Activated CD4-positive, alpha-beta T cell treated with anti-CD3 and anti-CD28 coated beads for 36 hours (primary cell): ENCODE measurements at regions of chr6 and their contacts with region 1.

Region 1: GRCh38 chr6:132483779-132484679 is 28.9 kb downstream of the STX7 start:
- DNase-seq: peak; percentile 55
- ATAC-seq: peak; percentile 55
- H3K4me3 Mint-ChIP-seq: no peak overlapping the region
- H3K27ac Mint-ChIP-seq: no peak overlapping the region
- H3K4me1 Mint-ChIP-seq: peaks cover 22% of the 10 kb centered on the region
- H3K27me3 Mint-ChIP-seq: no peaks in the 10 kb centered on the region

Region 2: GRCh38 chr6:131914967-131915751 is 568.9 kb before region 1 on chr6:
- CTCF ChIA-PET with region 1: interaction called, 3 read pairs
- POLR2A ChIA-PET with region 1: no interaction called
- intact Hi-C with region 1: loop called (anchors 5 to 10 kb)
- DNase-seq: peak; percentile 72
- ATAC-seq: peak; percentile 76
- H3K4me3 Mint-ChIP-seq: no peak overlapping the region
- H3K27ac Mint-ChIP-seq: no peak overlapping the region
- H3K4me1 Mint-ChIP-seq: peaks cover 9% of the 10 kb centered on the region
- H3K27me3 Mint-ChIP-seq: peaks cover 32% of the 10 kb centered on the region

Region 3: GRCh38 chr6:132289756-132290155 is 194.3 kb before region 1 on chr6:
- CTCF ChIA-PET with region 1: interaction called, 19 read pairs
- POLR2A ChIA-PET with region 1: no interaction called
- intact Hi-C with region 1: no loop called
- DNase-seq: no peak
- ATAC-seq: no peak
- H3K4me3 Mint-ChIP-seq: no peak overlapping the region
- H3K27ac Mint-ChIP-seq: no peak overlapping the region
- H3K4me1 Mint-ChIP-seq: no peaks in the 10 kb centered on the region
- H3K27me3 Mint-ChIP-seq: peaks cover 2% of the 10 kb centered on the region

Region 4: DNA sequence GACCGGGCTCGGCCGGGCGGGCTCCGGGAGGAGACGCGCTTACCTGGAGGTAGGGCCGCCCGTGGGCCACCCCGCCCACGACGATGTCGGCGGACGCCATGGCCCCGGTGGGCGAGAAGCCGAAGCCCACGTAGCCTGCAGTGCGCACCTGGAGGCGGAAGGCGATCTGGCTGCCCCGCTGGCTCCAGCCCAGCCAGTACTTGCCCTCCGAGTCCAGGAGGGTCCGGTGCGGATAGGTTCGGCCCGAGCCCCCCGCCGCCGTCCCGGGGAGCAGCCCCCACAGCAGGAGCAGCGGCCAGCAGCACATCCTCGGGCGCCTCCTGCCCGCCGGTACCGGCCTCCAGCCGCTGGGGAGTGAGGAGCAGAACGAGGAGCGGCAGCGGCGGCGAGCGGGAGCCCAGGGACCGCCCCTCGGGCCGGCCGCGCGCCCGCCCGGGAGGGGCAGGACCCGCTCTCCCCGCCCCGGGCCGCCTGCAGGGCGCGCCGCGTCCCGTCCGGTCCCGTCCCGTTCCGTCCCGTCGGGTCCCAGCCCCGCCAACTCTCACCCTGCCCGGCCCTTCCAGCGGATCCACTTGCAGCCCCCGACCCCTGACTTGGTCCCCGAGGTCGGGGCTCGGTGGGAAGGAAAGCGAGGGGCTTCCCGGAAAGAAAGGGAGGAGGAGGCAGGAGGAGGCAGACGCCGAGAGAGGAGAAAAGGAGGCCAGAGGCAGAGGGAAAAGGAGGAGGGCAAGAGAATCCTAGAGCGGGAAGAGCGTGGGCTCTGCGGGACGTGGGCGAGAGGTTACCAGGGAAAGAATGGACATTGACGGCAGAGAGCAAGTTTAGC is 82.7 kb before region 1 on chr6 and contains the start of gene MOXD1:
- CTCF ChIA-PET with region 1: no interaction called
- POLR2A ChIA-PET with region 1: no interaction called
- intact Hi-C with region 1: loop called in 1 of 2 experiments (anchors 5 kb)
- DNase-seq: peak; percentile 12
- ATAC-seq: peak; percentile 34
- H3K4me3 Mint-ChIP-seq: peak within 1 kb of the TSS; percentile 8
- H3K27ac Mint-ChIP-seq: no peak within 1 kb of the TSS
- H3K4me1 Mint-ChIP-seq: peaks cover 17% of the 10 kb centered on the region
- H3K27me3 Mint-ChIP-seq: peaks cover 58% of the 10 kb centered on the region
- total RNA-seq, gene MOXD1: not detected

Region 5: GRCh38 chr6:132412656-132413498 is 71.2 kb before region 1 on chr6:
- CTCF ChIA-PET with region 1: no interaction called
- POLR2A ChIA-PET with region 1: no interaction called
- intact Hi-C with region 1: no loop called
- DNase-seq: no peak
- ATAC-seq: no peak
- H3K4me3 Mint-ChIP-seq: no peak overlapping the region
- H3K27ac Mint-ChIP-seq: no peak overlapping the region
- H3K4me1 Mint-ChIP-seq: no peaks in the 10 kb centered on the region
- H3K27me3 Mint-ChIP-seq: peaks cover 25% of the 10 kb centered on the region

Region 6: GRCh38 chr6:132495604-132496079 is 11.6 kb after region 1 on chr6:
- CTCF ChIA-PET with region 1: interaction called, 32 read pairs
- POLR2A ChIA-PET with region 1: no interaction called
- intact Hi-C with region 1: no loop called
- DNase-seq: no peak
- ATAC-seq: peak; percentile 39
- H3K4me3 Mint-ChIP-seq: no peak overlapping the region
- H3K27ac Mint-ChIP-seq: peak overlapping the region; percentile 27
- H3K4me1 Mint-ChIP-seq: peaks cover 44% of the 10 kb centered on the region
- H3K27me3 Mint-ChIP-seq: no peaks in the 10 kb centered on the region